ENCODE measurements at regions of chr19 and their contacts with region 1.

Region 1: GRCh38 chr19:19372656-19373416 is 32.6 kb upstream of the GATAD2A start:
- DNase-seq: peak; percentile 87 to 92 (median 88)
- H3K4me3 ChIP-seq: peak overlapping the region in 1 of 3 experiments; percentile 53
- H3K4me3 Mint-ChIP-seq: peak overlapping the region; percentile 41 to 59
- H3K27ac ChIP-seq: peak overlapping the region; percentile 79 to 91
- H3K27ac Mint-ChIP-seq: peak overlapping the region; percentile 82 to 96 (median 94)
- H3K4me1 ChIP-seq: peaks cover 60 to 62% of the 10 kb centered on the region in 2 donors
- H3K4me1 Mint-ChIP-seq: peaks cover 43% of the 10 kb centered on the region
- H3K27me3 ChIP-seq: no peaks in the 10 kb centered on the region
- H3K27me3 Mint-ChIP-seq: peaks cover 0 to 3% (median 0%) of the 10 kb centered on the region in 3 donors
- CTCF ChIP-seq: no peak

Region 2: GRCh38 chr19:19410275-19411192 is 37.7 kb after region 1 on chr19:
- intact Hi-C with region 1: loop called (anchors 5 kb)
- DNase-seq: no peak
- H3K4me3 ChIP-seq: no peak overlapping the region
- H3K4me3 Mint-ChIP-seq: no peak overlapping the region
- H3K27ac ChIP-seq: peak overlapping the region in 1 of 2 donors; percentile 39
- H3K27ac Mint-ChIP-seq: peak overlapping the region in 4 of 7 donors; percentile 7 to 81 (median 68)
- H3K4me1 ChIP-seq: peaks cover 18 to 28% of the 10 kb centered on the region in 2 donors
- H3K4me1 Mint-ChIP-seq: peaks cover 56% of the 10 kb centered on the region
- H3K27me3 ChIP-seq: no peaks in the 10 kb centered on the region
- H3K27me3 Mint-ChIP-seq: peaks cover 0 to 2% (median 1%) of the 10 kb centered on the region in 3 donors
- CTCF ChIP-seq: no peak